ENCODE measurements at regions of chr17 and their contacts with region 1.

Region 1: DNA sequence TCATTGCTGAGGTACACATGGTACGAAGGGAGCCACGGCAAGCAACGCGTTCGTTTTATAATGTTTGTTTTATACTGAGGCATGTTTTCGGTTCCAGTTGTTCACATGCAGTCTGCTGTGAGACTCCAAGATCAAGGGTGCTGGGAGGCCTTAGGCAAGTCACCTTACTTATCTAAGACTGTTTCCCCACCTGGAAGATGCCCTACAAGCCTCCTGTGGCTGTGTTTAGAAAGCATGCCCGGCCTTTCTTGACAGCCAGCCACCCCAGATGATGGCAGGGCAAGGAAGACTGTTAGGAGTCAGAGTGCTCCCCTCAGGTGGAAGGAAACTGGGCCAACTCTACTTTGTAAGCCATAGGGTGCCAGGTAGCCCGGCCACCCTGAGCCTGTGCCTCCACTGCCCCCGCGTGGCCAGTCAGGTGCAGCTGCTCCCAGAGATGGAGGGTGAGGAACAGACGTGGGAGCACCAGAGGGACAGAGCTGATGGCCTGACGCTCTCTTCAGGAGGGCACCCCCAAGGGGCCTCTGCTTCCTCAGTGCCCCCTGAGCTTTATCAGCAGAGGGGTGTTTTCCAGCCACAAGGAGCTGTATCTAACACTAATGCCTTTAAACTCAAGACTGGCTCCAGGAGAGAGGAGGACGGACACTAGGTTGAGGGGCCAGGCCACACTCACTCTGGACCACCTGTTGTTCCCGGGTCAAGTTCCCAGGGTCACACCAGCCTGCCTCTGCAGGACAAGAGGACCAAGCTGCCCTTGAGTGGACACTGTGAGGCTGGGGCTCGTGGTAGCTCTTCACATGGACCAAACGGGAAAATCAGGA is 5.4 kb downstream of the NAT9 start:
- DNase-seq: peak; percentile 61 to 85 (median 72)
- ATAC-seq: peak; percentile 44 to 68 (median 60)
- H3K4me3 ChIP-seq: no peak overlapping the region
- H3K27ac ChIP-seq: no peak overlapping the region
- H3K4me1 ChIP-seq: peaks cover 0 to 62% (median 33%) of the 10 kb centered on the region in 12 donors
- H3K27me3 ChIP-seq: no peaks in the 10 kb centered on the region
- CTCF ChIP-seq: peak; percentile 68 to 86 (median 76)
- POLR2A ChIP-seq: no peak

Region 2: DNA sequence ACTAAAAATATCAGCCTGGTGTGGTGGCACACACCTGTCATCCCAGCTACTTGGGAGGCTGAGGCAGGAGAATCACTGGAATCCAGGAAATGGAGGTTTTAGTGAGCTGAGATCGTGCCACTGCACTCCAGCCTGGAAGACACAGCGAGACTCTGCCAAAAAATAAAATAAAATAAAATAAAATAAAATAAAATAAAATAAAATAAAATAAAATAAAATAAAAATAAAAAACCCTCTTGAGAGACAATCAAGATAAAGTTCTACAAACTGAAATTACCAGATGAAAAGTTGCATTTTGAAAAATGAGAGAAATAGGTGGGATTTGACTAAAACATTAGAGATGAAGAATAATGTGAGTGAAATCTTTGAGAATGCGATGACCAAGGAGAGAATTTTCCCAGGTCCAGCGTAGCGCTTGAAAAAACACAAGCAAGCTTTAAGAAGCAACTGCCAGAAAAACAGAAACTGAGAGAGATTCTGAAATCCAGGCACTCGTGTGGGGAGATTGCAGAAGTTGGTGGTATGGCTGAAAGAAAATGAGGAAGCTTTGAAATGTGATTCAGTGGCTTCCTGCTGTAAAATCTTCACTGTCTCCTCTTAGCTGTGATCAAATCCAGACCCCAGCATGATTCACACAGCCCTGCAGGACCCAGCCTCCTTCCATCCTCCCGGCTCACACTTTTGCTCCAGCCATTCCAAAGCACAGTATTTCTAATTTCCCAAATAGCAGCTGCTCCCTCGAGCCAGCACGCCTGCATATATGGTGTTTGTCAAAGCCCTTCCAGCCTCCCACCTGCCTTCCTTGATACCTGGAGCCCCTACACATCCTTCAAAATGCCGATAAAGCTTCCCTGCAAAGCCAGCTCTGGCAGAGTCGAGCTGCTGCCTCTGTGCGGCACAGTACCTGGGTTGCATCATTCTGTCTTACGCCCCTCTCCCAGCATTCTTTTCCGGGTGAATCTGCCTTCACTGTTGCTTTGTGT is 138.9 kb before region 1 on chr17:
- intact Hi-C with region 1: no loop called
- DNase-seq: no peak
- ATAC-seq: peak in 2 of 4 donors; percentile 49 to 75
- H3K4me3 ChIP-seq: no peak overlapping the region
- H3K27ac ChIP-seq: peak overlapping the region in 1 of 12 donors; percentile 82
- H3K4me1 ChIP-seq: peaks cover 0 to 30% (median 0%) of the 10 kb centered on the region in 12 donors
- H3K27me3 ChIP-seq: peaks cover 0 to 54% (median 18%) of the 10 kb centered on the region in 9 donors
- CTCF ChIP-seq: no peak
- POLR2A ChIP-seq: no peak

Region 3: GRCh38 chr17:74659898-74660297 is 110.8 kb before region 1 on chr17:
- intact Hi-C with region 1: loop called in 1 of 10 experiments (anchors 5 kb)
- DNase-seq: no peak
- ATAC-seq: no peak
- H3K4me3 ChIP-seq: no peak overlapping the region
- H3K27ac ChIP-seq: no peak overlapping the region
- H3K4me1 ChIP-seq: peaks cover 0 to 3% (median 0%) of the 10 kb centered on the region in 12 donors
- H3K27me3 ChIP-seq: peaks cover 0 to 78% (median 25%) of the 10 kb centered on the region in 9 donors
- CTCF ChIP-seq: no peak
- POLR2A ChIP-seq: no peak

Region 4: GRCh38 chr17:74736513-74737298 is 34.0 kb before region 1 on chr17 and contains the start of gene RAB37:
- intact Hi-C with region 1: loop called in 1 of 10 experiments (anchors 5 kb)
- DNase-seq: peak in 1 of 5 donors; percentile 79
- ATAC-seq: peak in 3 of 4 donors; percentile 45 to 57 (median 53)
- H3K4me3 ChIP-seq: peak within 1 kb of the TSS; percentile 16 to 59 (median 45)
- H3K27ac ChIP-seq: peak within 1 kb of the TSS in 9 of 12 donors; percentile 6 to 87 (median 36)
- H3K4me1 ChIP-seq: peaks cover 0 to 56% (median 19%) of the 10 kb centered on the region in 12 donors
- H3K27me3 ChIP-seq: peaks cover 18 to 55% (median 32%) of the 10 kb centered on the region in 9 donors
- CTCF ChIP-seq: peak in 10 of 12 donors; percentile 26 to 56 (median 42)
- POLR2A ChIP-seq: no peak
- total RNA-seq, gene RAB37: 0.76 to 3.6 (median 1.7) TPM

Region 5: DNA sequence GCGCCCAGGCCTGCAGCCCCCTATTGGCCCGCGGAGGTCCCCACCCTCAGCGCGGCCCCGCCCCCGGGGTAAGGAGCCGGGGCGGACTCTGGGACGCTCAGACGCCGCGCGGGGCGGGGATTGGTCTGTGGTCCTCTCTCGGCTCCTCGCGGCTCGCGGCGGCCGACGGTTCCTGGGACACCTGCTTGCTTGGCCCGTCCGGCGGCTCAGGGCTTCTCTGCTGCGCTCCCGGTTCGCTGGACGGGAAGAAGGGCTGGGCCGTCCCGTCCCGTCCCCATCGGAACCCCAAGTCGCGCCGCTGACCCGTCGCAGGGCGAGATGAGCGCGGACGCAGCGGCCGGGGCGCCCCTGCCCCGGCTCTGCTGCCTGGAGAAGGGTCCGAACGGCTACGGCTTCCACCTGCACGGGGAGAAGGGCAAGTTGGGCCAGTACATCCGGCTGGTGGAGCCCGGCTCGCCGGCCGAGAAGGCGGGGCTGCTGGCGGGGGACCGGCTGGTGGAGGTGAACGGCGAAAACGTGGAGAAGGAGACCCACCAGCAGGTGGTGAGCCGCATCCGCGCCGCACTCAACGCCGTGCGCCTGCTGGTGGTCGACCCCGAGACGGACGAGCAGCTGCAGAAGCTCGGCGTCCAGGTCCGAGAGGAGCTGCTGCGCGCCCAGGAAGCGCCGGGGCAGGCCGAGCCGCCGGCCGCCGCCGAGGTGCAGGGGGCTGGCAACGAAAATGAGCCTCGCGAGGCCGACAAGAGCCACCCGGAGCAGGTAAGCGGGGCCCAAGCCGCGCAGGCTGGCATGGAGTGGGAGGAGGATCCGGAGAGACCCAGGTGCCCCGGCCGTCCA is 22.0 kb before region 1 on chr17 and contains the start of gene NHERF1:
- intact Hi-C with region 1: loop called in 9 of 10 experiments (anchors 1 to 2 kb)
- DNase-seq: peak in 4 of 5 donors; percentile 95 to 97 (median 96)
- ATAC-seq: peak; percentile 91 to 97 (median 96)
- H3K4me3 ChIP-seq: peak within 1 kb of the TSS; percentile 69 to 100 (median 95)
- H3K27ac ChIP-seq: peak within 1 kb of the TSS in 11 of 12 donors; percentile 69 to 92 (median 85)
- H3K4me1 ChIP-seq: peaks cover 2 to 85% (median 40%) of the 10 kb centered on the region in 12 donors
- H3K27me3 ChIP-seq: no peaks in the 10 kb centered on the region
- CTCF ChIP-seq: peak in 6 of 12 donors; percentile 1 to 21 (median 10)
- POLR2A ChIP-seq: peak; percentile 83 to 100
- total RNA-seq, gene NHERF1: 11.6 to 42.2 (median 19.2) TPM

Region 6: DNA sequence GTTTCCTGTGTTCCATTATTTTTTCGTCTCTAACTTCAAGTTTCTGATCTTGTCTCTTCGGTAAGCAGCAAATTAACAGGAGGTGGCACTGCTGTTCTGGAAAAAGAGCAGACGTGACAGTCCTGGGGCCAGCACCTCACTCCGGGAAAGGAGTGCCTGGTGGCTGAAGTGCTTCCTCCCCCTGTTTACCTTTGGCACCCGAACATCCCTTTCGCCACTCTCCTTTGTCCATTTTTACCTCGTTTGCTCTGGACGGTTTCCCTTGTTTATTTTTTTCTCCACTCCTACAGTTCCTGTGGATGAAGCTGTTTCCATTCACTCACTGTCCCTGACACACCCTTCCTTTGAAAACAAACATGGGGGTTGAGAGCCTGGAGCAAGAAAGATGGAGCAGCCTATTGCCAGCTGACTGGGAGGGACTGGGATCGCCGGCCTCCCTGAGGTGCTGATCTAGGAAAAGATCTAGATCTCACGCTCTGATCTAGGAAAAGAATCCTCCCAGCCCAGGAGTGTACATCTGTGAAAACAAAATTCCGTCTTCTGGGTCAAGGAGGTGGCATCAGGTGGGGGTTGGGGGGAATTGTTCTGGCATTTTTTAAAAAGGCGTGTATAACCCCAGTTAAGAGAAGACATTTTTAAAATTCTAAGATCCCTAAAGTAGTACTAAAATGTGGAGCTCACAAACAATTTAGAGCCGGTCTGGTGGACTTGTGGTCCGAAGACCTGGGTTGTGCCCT is 909.2 kb after region 1 on chr17:
- intact Hi-C with region 1: no loop called
- DNase-seq: peak in 3 of 5 donors; percentile 42 to 50 (median 50)
- ATAC-seq: peak in 3 of 4 donors; percentile 69 to 86 (median 84)
- H3K4me3 ChIP-seq: no peak overlapping the region
- H3K27ac ChIP-seq: peak overlapping the region; percentile 16 to 74 (median 64)
- H3K4me1 ChIP-seq: peaks cover 0 to 46% (median 33%) of the 10 kb centered on the region in 12 donors
- H3K27me3 ChIP-seq: no peaks in the 10 kb centered on the region
- CTCF ChIP-seq: peak in 10 of 12 donors; percentile 15 to 55 (median 38)
- POLR2A ChIP-seq: no peak

Measured in heart left ventricle (tissue), 16 donors.